Activated CD4-positive, alpha-beta memory T cell treated with anti-CD3 and anti-CD28 coated beads, Interleukin-2, amount 10 ng/mL, durations not matched to agents 7 days and 5 days (primary cell): ENCODE measurements at regions of chr12 and their contacts with region 1.

Region 1: DNA sequence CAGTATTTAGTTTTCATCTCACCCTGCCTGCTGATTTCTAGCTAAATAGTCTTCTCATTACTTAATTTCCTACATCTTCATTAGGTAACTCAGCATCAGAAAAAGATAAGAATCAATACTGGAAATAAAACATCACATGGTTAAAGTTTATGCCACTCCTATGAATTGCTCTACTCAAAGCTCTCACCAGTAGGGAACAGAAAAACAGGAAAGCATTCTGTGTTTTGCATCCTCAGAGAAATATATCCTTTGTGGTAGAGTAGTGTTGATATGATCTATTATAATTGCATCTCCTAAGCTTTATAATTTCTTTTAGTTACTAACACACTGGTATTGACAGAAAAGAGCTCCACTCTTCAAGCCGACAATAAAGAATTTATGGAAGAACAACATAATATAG is 9.9 kb downstream of the CPNE8 start:
- DNase-seq: no peak
- H3K4me3 Mint-ChIP-seq: no peak overlapping the region
- H3K27ac Mint-ChIP-seq: no peak overlapping the region
- H3K4me1 Mint-ChIP-seq: peaks cover 8% of the 10 kb centered on the region
- H3K27me3 Mint-ChIP-seq: no peaks in the 10 kb centered on the region

Region 2: GRCh38 chr12:38469715-38470114 is 425.7 kb before region 1 on chr12:
- CTCF ChIA-PET with region 1: no interaction called
- POLR2A ChIA-PET with region 1: no interaction called
- DNase-seq: no peak
- H3K4me3 Mint-ChIP-seq: no peak overlapping the region
- H3K27ac Mint-ChIP-seq: no peak overlapping the region
- H3K4me1 Mint-ChIP-seq: no peaks in the 10 kb centered on the region
- H3K27me3 Mint-ChIP-seq: no peaks in the 10 kb centered on the region

Region 3: GRCh38 chr12:38869036-38869435 is 26.4 kb before region 1 on chr12:
- CTCF ChIA-PET with region 1: no interaction called
- POLR2A ChIA-PET with region 1: no interaction called
- DNase-seq: no peak
- H3K4me3 Mint-ChIP-seq: no peak overlapping the region
- H3K27ac Mint-ChIP-seq: no peak overlapping the region
- H3K4me1 Mint-ChIP-seq: no peaks in the 10 kb centered on the region
- H3K27me3 Mint-ChIP-seq: no peaks in the 10 kb centered on the region

Region 4: DNA sequence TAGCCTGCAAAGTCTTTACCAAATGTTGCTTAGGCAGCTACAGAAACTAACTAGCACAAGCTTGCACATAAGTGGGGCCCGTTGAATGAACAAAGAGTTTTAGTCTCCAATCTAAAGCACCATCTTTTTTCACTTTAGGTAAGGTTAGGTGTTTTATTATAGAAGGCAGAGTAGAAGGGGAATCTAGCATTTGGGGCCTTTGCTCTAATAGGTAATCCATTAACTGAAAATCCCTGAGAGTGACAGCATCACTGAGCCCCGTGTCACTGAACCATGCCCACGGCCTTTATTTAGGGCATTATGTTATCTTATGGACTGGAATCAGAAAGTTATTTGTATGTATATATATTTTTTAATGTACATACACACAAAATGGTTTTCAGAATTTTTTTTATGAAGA is 15.2 kb before region 1 on chr12:
- CTCF ChIA-PET with region 1: no interaction called
- POLR2A ChIA-PET with region 1: no interaction called
- DNase-seq: no peak
- H3K4me3 Mint-ChIP-seq: no peak overlapping the region
- H3K27ac Mint-ChIP-seq: no peak overlapping the region
- H3K4me1 Mint-ChIP-seq: no peaks in the 10 kb centered on the region
- H3K27me3 Mint-ChIP-seq: no peaks in the 10 kb centered on the region

Region 5: GRCh38 chr12:38906482-38907170 is 11.2 kb after region 1 on chr12:
- CTCF ChIA-PET with region 1: interaction called, 19 read pairs
- POLR2A ChIA-PET with region 1: interaction called, 3 read pairs
- DNase-seq: peak; percentile 71
- H3K4me3 Mint-ChIP-seq: peak overlapping the region; percentile 86
- H3K27ac Mint-ChIP-seq: peak overlapping the region; percentile 58
- H3K4me1 Mint-ChIP-seq: peaks cover 30% of the 10 kb centered on the region
- H3K27me3 Mint-ChIP-seq: peaks cover 21% of the 10 kb centered on the region